Activated CD4-positive, alpha-beta T cell treated with anti-CD3 and anti-CD28 coated beads, Interleukin-2, amount 10 ng/mL, durations not matched to agents 24 days and 14 days (primary cell): ENCODE measurements at regions of chr7 and their contacts with region 1.

Region 1: DNA sequence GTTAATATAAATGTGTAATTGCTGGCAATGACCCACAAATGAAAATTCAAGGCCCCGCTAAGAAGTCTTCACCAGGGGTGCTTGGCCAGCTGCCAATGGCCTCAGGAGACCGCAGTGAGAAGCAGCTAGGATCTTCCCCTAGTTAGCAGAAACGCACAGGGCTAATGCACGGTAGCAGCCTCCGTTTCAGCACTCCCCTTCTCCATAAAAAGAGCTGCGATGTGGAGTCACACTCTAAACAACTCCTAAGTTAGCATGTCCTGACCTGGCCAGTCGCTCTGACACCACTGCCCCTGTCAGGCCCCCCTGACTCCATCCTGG is 139.0 kb downstream of the SEPTIN14 start:
- DNase-seq: no peak
- H3K4me3 Mint-ChIP-seq: no peak overlapping the region
- H3K27ac Mint-ChIP-seq: no peak overlapping the region
- H3K4me1 Mint-ChIP-seq: peaks cover 3% of the 10 kb centered on the region
- H3K27me3 Mint-ChIP-seq: no peaks in the 10 kb centered on the region

Region 2: DNA sequence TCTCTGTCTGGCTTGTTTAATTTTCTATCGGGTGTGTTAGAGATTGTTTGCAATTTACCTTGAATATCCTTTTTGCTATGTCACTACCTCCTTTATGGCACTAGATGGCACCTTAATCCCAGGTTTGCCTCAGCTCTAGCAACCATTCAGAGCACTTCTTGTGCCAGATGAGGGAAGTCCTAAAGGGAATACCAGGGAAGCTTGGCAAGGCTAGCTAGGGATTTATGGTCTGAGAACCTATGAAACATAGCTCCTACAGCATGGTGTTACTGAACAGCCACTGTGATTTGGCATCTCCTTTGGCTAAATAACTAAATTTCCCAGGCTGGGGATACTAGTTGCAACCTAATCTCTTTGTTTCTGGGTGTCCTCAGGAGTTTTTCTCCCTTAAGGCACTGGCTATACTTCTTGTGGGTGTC is 82.3 kb before region 1 on chr7:
- intact Hi-C with region 1: loop called (anchors 5 kb)
- DNase-seq: peak; percentile 83
- H3K4me3 Mint-ChIP-seq: no peak overlapping the region
- H3K27ac Mint-ChIP-seq: no peak overlapping the region
- H3K4me1 Mint-ChIP-seq: peaks cover 8% of the 10 kb centered on the region
- H3K27me3 Mint-ChIP-seq: peaks cover 9% of the 10 kb centered on the region